Right ventricle myocardium superior (tissue), 1 donor: ENCODE measurements at regions of chr17 and their contacts with region 1.

Region 1: DNA sequence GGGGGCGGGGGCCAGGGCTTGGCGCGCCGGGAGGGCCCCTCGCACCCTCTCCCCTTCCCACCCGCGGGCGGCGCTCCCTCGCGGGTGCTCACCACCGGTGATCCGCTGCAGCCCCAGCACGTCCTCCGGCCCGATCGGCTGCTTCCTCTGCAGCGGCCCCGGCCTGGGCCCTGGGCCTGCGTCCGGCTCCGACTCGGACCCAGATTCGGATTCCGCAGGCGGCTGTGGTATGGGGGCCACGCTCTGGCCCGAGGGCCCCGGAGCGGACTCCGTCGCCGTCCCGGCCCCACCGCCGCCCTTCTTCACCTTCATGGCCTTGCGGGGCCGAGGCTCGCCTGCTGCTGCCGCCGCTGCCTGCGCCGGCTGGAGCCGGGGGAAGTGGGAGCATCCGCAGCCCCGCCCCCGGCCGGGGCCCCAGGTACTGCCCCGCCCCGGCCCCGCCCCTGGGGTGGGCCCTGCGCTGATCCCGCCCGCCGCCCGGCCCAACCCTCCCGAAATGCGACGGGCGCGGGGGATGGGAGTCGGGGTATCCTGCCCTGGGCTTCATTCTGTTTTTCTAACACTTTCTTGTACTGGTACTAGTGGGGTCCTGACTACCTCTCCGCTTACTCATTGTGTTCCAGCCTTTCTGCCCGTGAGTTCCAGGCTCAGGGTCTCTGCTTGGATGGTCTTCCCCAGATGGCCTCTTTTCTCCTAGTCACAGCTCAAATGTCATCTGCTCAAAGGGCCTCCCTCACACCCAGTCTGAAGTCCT is at the start of gene UNC119:
- DNase-seq: peak; percentile 88
- ATAC-seq: peak; percentile 98
- total RNA-seq, gene UNC119: 22.6 TPM

Region 2: DNA sequence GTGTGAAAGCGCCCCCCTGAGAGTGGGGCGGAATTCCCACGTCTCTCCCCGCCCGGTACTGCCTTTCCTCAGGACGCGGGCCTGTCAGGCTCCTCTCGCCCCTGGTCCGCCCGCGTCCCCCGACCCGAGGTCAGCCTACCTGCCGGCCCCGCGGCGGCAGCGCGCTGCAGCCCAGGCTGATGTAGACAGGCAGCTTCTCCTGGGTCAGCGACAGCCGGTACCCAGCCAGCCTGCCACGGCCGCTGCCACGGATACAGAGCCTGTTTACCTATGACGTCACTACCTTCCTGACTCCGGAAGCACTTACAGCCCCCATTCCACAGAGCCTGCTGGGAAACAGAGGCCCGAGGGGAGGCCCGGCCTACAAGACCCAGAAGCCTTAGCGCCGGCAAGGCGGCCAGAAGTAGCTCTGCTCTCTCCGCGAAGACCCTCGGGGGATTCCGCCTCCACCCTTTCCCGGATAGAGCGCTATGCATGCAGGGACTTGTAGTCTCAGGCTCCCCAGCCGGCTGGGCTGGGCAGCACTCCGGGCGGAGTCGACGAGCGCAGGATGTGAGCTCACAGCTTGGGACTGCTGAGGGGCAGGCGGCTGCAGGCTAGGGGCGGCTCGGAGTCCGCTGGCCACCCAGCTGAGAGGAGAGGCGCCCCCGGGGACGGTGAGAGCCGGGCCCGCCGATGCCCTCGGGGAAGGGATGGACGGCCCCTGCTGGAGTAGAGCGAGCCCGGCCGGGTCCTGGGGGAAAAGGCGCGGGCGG is 217.0 kb before region 1 on chr17 and contains the starts of genes IFT20 and TNFAIP1:
- intact Hi-C with region 1: no loop called
- DNase-seq: peak; percentile 99
- ATAC-seq: peak; percentile 98
- total RNA-seq, gene IFT20: 11.2 TPM
- total RNA-seq, gene TNFAIP1: 33.8 TPM

Region 3: GRCh38 chr17:28494445-28495188 is 57.8 kb before region 1 on chr17:
- intact Hi-C with region 1: no loop called
- DNase-seq: peak; percentile 79
- ATAC-seq: peak; percentile 81

Region 4: DNA sequence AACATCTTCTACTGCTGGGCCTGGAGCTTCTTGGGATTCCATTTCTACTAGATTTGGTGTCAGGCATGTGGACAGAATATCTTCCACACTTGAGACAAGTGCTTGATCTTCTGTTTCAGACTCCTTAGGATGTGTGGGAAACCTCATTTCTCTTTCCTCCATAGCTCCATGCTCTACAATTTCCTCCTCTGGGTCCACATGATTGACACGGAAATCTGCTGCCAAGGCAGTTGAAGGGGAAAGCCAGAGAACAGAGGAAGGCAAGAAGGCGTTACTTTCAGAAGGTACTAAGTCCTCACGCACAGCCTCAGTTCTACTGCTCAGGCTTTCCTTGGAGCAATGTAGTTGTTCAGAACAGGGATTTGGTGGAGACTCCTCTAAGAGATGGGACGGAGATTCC is 39.8 kb after region 1 on chr17:
- intact Hi-C with region 1: loop called (anchors 5 kb)
- DNase-seq: no peak
- ATAC-seq: no peak

Region 5: GRCh38 chr17:28612936-28613872 is 60.8 kb after region 1 on chr17:
- intact Hi-C with region 1: loop called (anchors 5 kb)
- DNase-seq: no peak
- ATAC-seq: peak; percentile 66